Right cardiac atrium (tissue), 5 donors: ENCODE measurements at regions of chr15 and their contacts with region 1.

Region 1: GRCh38 chr15:88447206-88447605 is 20.0 kb downstream of the MRPL46 start:
- DNase-seq: no peak
- ATAC-seq: no peak
- H3K4me3 ChIP-seq: no peak overlapping the region
- H3K27ac ChIP-seq: no peak overlapping the region
- H3K4me1 ChIP-seq: no peaks in the 10 kb centered on the region
- H3K27me3 ChIP-seq: no peaks in the 10 kb centered on the region

Region 2: DNA sequence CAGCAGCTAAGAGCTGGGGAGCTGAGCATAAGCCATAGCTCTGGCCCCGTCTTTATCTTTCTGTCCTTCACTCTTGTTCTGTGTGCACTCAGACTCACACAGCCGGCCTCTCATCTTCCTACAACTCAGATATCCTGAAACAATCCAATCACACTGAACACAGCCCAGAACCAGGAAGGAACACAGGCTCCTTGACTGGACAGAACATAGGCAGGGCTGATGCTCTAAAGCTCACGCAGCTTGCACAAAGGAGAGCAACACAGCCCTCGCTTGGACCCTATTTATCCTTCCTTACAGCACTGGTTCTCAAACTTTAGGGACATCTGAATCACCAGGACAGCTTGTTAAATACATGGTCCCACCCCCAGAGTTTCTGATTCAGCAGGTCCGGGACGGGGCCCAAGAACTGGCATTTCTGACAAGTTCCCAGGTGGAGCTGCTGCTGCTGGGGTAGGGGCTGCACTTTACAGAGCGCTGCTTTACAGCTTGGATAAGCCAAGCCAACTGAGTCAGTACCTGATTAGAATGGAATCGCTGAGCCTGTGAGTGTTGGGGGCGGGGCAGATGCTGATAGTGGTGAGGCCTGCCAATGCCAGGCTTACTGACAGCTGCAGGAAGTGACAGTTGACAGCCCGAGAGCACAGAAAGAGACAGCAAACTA is 45.1 kb before region 1 on chr15:
- intact Hi-C with region 1: loop called in 1 of 4 experiments (anchors 2 kb)
- DNase-seq: peak; percentile 51 to 81 (median 79)
- ATAC-seq: peak; percentile 75 to 78
- H3K4me3 ChIP-seq: no peak overlapping the region
- H3K27ac ChIP-seq: peak overlapping the region; percentile 76
- H3K4me1 ChIP-seq: no peaks in the 10 kb centered on the region
- H3K27me3 ChIP-seq: no peaks in the 10 kb centered on the region

Region 3: GRCh38 chr15:88513195-88513594 is 66.0 kb after region 1 on chr15:
- intact Hi-C with region 1: no loop called
- DNase-seq: no peak
- ATAC-seq: no peak
- H3K4me3 ChIP-seq: no peak overlapping the region
- H3K27ac ChIP-seq: no peak overlapping the region
- H3K4me1 ChIP-seq: no peaks in the 10 kb centered on the region
- H3K27me3 ChIP-seq: no peaks in the 10 kb centered on the region